Right cardiac atrium (tissue), 5 donors: ENCODE measurements at regions of chr3 and their contacts with region 1.

Region 1: GRCh38 chr3:59771768-59772181 is 722.0 kb upstream of the CFAP20DC start:
- DNase-seq: no peak
- ATAC-seq: no peak
- H3K4me3 ChIP-seq: no peak overlapping the region
- H3K27ac ChIP-seq: no peak overlapping the region
- H3K4me1 ChIP-seq: no peaks in the 10 kb centered on the region
- H3K27me3 ChIP-seq: no peaks in the 10 kb centered on the region

Region 2: DNA sequence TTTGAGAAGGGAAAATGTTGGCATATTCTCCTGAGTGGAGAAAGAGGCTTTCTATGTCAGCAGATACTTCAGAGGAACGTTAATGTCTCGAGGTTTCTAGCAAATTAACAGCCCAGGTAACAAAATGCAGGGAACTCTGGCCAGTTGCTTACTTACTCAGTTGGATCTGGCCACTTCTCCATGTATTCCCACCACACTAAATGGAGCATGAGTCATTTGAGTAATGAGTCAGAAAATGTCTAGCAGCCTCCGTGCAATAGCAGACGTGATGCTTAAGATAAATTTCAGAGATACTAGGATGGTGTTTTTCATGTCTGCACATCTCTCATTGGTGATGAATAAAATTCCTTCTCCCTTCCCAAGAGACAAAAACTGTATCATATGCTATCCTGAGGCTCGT is 808.0 kb after region 1 on chr3:
- intact Hi-C with region 1: loop called in 1 of 4 experiments (anchors 10 kb)
- DNase-seq: no peak
- ATAC-seq: no peak
- H3K4me3 ChIP-seq: no peak overlapping the region
- H3K27ac ChIP-seq: no peak overlapping the region
- H3K4me1 ChIP-seq: no peaks in the 10 kb centered on the region
- H3K27me3 ChIP-seq: no peaks in the 10 kb centered on the region